Prostate gland (tissue), 2 donors: ENCODE measurements at regions of chr12 and their contacts with region 1.

Region 1: GRCh38 chr12:91040096-91040755 is 17.6 kb downstream of the KERA start:
- DNase-seq: no peak
- H3K4me3 ChIP-seq: no peak overlapping the region
- H3K27ac ChIP-seq: no peak overlapping the region
- H3K4me1 ChIP-seq: no peaks in the 10 kb centered on the region
- H3K27me3 ChIP-seq: no peaks in the 10 kb centered on the region
- CTCF ChIP-seq: no peak
- POLR2A ChIP-seq: no peak

Region 2: DNA sequence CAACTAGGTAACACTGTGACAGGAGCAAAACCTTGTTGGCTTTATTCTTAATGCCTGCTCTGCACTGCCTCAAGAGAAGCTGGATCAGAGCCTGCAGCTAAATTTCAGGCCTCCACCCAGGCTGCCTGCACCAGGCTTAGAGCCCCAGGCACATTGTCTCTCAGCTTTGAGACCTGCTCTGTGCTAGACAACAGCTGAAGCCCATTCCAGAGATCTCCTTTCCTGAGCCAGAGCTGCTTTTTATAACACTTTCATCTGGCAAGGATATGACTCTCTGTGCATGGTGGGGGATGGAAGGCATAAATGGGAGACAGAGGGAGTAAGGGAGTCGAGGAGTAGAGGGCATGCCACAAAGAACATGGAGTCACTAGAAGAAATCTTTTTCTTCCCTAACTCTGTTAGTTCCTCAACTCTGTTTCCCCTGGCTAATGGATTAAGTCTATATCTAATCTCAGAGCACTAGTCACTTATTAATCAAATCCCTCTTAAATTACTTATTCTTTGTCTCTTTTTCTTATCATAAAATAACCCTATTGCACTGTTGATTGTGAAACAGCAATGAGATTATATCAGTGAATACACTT is 98.2 kb after region 1 on chr12:
- intact Hi-C with region 1: loop called (anchors 10 kb)
- DNase-seq: no peak
- H3K4me3 ChIP-seq: no peak overlapping the region
- H3K27ac ChIP-seq: no peak overlapping the region
- H3K4me1 ChIP-seq: no peaks in the 10 kb centered on the region
- H3K27me3 ChIP-seq: no peaks in the 10 kb centered on the region
- CTCF ChIP-seq: no peak
- POLR2A ChIP-seq: no peak